ENCODE measurements at regions of chr1 and their contacts with region 1.

Region 1: DNA sequence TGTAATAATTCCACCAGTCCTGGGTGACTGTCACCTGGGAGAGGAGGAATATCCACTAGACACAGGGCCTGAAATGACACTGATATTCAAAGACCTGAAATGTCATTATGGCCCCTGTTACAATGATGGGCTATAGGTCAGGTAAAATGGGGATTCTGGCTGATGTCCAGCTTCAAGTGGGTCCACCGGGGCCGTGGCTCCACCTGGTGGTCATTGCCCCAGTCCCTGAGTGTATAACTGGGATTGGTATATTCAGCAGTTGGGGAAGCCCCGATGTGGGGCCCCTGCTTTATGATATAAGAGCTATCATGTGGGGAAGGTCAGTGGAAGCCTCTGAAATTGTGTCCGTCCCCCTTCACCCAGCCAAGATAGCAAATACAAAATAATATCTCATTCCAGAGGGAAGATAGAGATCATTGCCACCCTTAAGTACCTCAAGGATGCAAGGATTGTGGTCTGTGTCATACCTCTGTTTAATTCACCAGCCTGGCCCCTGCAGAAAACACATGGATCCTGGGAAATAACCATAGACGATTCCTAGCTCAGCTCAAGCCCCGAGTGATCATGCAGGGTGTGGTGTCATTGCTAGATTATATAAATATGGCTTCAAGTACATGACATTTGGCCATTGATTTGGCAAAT is 19.4 kb downstream of the PLEKHO1 start:
- DNase-seq: peak; percentile 77 to 91
- ATAC-seq: peak; percentile 69
- H3K4me3 ChIP-seq: no peak overlapping the region
- H3K27ac ChIP-seq: no peak overlapping the region
- H3K4me1 ChIP-seq: no peaks in the 10 kb centered on the region
- H3K27me3 ChIP-seq: no peaks in the 10 kb centered on the region

Region 2: DNA sequence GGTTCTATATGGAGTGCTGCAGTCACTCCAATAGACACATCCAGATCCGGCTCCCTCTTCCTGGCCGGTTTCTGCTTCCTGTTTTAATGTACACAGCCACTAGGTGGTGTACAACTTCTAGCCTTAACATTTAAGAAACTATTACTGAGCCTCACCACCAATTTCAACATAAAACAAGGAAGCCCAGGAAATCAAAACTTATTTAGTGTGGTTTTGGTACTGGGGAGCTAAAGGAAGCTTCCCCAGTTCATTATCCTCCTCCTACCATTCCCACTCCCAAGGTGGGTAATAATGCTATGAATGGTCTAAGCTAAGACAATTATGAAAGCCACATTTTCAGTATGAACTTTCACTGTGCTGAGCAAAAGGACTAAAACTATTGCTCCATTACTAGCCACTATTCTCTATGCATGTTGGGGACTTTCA is 206.9 kb before region 1 on chr1:
- intact Hi-C with region 1: loop called (anchors 2 to 5 kb)
- DNase-seq: peak in 1 of 2 donors; percentile 50
- ATAC-seq: peak; percentile 87
- H3K4me3 ChIP-seq: no peak overlapping the region
- H3K27ac ChIP-seq: peak overlapping the region in 1 of 2 donors; percentile 37
- H3K4me1 ChIP-seq: no peaks in the 10 kb centered on the region
- H3K27me3 ChIP-seq: no peaks in the 10 kb centered on the region

Region 3: GRCh38 chr1:150072959-150073358 is 96.1 kb before region 1 on chr1:
- intact Hi-C with region 1: loop called (anchors 2 kb)
- DNase-seq: no peak
- ATAC-seq: peak; percentile 36
- H3K4me3 ChIP-seq: no peak overlapping the region
- H3K27ac ChIP-seq: no peak overlapping the region
- H3K4me1 ChIP-seq: peaks cover 0 to 4% of the 10 kb centered on the region in 2 donors
- H3K27me3 ChIP-seq: no peaks in the 10 kb centered on the region